ENCODE measurements at regions of chr19 and their contacts with region 1.

Region 1: DNA sequence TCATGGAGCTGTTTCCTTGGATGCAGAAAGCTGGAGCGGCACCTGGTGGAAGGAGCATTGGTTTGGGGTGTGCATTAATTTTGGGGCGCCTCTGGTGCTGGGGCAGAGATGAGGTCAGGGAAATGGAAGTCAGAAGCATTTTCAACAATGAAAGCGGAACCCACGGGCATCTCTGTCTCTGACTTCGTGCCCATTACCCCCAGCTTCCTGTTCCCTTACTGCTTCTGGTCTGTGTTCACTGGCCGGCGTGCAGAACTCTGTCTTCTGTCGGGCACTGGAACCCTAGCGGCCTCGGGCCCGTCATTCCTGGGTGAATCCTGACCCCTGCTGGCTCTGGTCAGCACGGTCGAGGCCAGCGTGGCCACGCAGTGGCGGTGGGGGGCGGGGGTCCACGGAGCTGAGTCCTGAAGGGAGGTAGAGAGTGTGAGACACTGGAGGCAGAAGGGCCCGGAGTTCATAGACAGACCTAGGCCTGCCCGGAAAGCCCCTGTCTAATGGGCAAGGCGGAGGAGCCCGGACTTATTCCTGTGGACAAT is 7.9 kb upstream of the LINGO3 start:
- DNase-seq: peak in 4 of 14 experiments; percentile 31 to 68 (median 48)
- ATAC-seq: no peak
- H3K4me3 ChIP-seq: no peak overlapping the region
- H3K4me3 Mint-ChIP-seq: no peak overlapping the region
- H3K27ac ChIP-seq: no peak overlapping the region
- H3K27ac Mint-ChIP-seq: no peak overlapping the region
- H3K4me1 ChIP-seq: peaks cover 8% of the 10 kb centered on the region
- H3K4me1 Mint-ChIP-seq: no peaks in the 10 kb centered on the region
- H3K27me3 ChIP-seq: peaks cover 21 to 23% of the 10 kb centered on the region in 2 experiments
- H3K27me3 Mint-ChIP-seq: peaks cover 30% of the 10 kb centered on the region
- CTCF ChIP-seq: peak; percentile 4

Region 2: GRCh38 chr19:2157452-2157851 is 158.4 kb before region 1 on chr19:
- CTCF ChIA-PET with region 1: no interaction called
- POLR2A ChIA-PET with region 1: no interaction called
- intact Hi-C with region 1: loop called in 1 of 2 experiments (anchors 2 kb)
- DNase-seq: no peak
- ATAC-seq: no peak
- H3K4me3 ChIP-seq: no peak overlapping the region
- H3K4me3 Mint-ChIP-seq: no peak overlapping the region
- H3K27ac ChIP-seq: no peak overlapping the region
- H3K27ac Mint-ChIP-seq: no peak overlapping the region
- H3K4me1 ChIP-seq: peaks cover 5% of the 10 kb centered on the region
- H3K4me1 Mint-ChIP-seq: no peaks in the 10 kb centered on the region
- H3K27me3 ChIP-seq: no peaks in the 10 kb centered on the region
- H3K27me3 Mint-ChIP-seq: no peaks in the 10 kb centered on the region
- CTCF ChIP-seq: no peak

Region 3: GRCh38 chr19:2274931-2275535 is 40.9 kb before region 1 on chr19:
- CTCF ChIA-PET with region 1: no interaction called
- POLR2A ChIA-PET with region 1: no interaction called
- intact Hi-C with region 1: loop called in 1 of 2 experiments (anchors 5 kb)
- DNase-seq: peak in 8 of 14 experiments; percentile 42 to 77 (median 56)
- ATAC-seq: peak; percentile 17
- H3K4me3 ChIP-seq: no peak overlapping the region
- H3K4me3 Mint-ChIP-seq: peak overlapping the region; percentile 85
- H3K27ac ChIP-seq: no peak overlapping the region
- H3K27ac Mint-ChIP-seq: peak overlapping the region; percentile 97
- H3K4me1 ChIP-seq: peaks cover 47% of the 10 kb centered on the region
- H3K4me1 Mint-ChIP-seq: peaks cover 31% of the 10 kb centered on the region
- H3K27me3 ChIP-seq: peaks cover 0 to 6% of the 10 kb centered on the region in 2 experiments
- H3K27me3 Mint-ChIP-seq: no peaks in the 10 kb centered on the region
- CTCF ChIP-seq: peak; percentile 47